ENCODE measurements at regions of chr3 and their contacts with region 1.

Region 1: GRCh38 chr3:9890249-9891071 is at the start of gene JAGN1:
- DNase-seq: peak; percentile 82
- H3K4me3 Mint-ChIP-seq: peak within 1 kb of the TSS; percentile 97
- H3K27ac Mint-ChIP-seq: peak within 1 kb of the TSS; percentile 98
- H3K4me1 Mint-ChIP-seq: peaks cover 36% of the 10 kb centered on the region
- H3K27me3 Mint-ChIP-seq: no peaks in the 10 kb centered on the region
- total RNA-seq, gene JAGN1: 42.4 and 46.3 TPM in 2 replicates

Region 2: DNA sequence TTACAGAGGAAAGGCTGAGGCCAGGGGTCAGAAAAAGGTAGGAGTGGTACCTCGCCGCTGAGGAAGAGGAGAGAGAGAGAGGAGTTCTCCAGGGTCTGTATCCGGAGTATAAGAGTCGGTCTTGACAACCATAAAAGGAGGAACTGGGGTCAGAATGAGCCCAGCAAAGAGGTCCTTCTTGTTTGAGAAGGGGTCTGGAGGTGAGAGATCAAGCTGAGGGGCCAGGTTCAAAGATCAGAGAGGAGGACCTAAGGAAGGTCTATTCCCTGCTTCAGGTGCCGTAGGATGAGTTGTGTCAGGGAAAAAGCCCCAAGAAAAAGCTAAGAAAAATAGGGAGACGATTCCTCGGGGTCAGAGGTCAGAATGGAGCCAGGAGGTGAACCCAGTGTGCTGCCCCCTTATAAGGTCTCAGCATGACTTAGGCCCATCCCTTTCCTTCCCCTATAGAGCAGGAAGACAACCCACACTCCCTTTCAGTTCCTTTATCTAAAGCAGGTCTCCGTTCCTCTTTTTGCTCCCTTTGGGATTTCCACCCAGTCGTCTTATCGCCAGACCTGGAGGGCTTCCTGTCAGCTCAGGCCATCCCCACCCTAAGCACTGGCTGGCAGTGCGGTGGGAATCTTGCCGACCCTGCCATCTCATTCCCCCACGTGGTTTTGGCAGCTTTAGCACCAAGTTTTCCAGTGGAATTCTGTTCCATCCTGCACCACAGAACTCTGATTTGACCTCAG is 240.5 kb before region 1 on chr3:
- intact Hi-C with region 1: loop called (anchors 1 kb)
- DNase-seq: no peak
- H3K4me3 Mint-ChIP-seq: peak overlapping the region; percentile 93
- H3K27ac Mint-ChIP-seq: peak overlapping the region; percentile 82
- H3K4me1 Mint-ChIP-seq: peaks cover 13% of the 10 kb centered on the region
- H3K27me3 Mint-ChIP-seq: no peaks in the 10 kb centered on the region

Region 3: DNA sequence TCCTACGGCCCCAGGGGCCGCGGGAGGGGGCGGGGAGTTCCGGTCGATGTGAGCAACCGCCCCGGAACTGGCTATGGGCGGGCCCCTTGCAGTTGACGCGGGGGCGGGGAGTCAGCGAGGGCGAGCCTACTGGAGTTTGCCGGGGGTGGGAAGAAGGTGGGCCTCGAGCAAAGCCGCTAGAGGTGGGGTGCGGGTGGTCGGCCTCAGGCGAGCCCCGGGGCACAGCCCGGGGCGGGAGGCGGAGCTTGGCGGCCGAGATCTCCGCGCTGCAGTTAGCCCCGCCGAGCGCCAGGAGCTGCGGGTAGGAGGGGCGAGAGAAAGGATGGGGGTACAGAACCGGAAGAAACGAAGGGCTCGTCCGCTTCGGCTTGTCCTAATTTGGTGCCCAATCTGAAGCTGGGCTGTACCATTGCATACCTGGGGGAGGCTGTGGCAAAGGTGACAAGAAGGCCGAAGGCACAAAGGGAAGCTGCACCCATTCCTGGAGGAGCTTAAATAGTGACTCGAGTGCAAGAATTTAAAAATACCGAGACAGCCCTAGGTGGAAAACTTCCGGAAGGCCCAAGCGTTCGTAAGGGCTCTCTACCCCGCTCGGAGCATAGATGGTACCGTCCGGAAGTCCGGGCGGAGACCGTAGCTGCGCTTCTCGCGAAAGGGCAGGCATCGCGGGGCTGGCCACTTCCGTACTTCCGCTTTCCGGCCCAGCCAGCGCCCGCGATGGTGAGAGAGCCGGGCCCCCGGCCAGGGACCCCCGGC is 97.9 kb before region 1 on chr3 and contains the starts of genes ARPC4 and TADA3:
- intact Hi-C with region 1: loop called (anchors 1 kb)
- DNase-seq: peak; percentile 89
- H3K4me3 Mint-ChIP-seq: peak within 1 kb of the TSS; percentile 99
- H3K27ac Mint-ChIP-seq: peak within 1 kb of the TSS; percentile 100
- H3K4me1 Mint-ChIP-seq: peaks cover 57% of the 10 kb centered on the region
- H3K27me3 Mint-ChIP-seq: no peaks in the 10 kb centered on the region
- total RNA-seq, gene ARPC4: 268 and 273 TPM in 2 replicates
- total RNA-seq, gene TADA3: 63.4 and 63.6 TPM in 2 replicates

Region 4: GRCh38 chr3:9915254-9916141 is 25.0 kb after region 1 on chr3:
- intact Hi-C with region 1: loop called (anchors 1 kb)
- DNase-seq: no peak
- H3K4me3 Mint-ChIP-seq: peak overlapping the region; percentile 68
- H3K27ac Mint-ChIP-seq: no peak overlapping the region
- H3K4me1 Mint-ChIP-seq: peaks cover 16% of the 10 kb centered on the region
- H3K27me3 Mint-ChIP-seq: peaks cover 7% of the 10 kb centered on the region

Region 5: DNA sequence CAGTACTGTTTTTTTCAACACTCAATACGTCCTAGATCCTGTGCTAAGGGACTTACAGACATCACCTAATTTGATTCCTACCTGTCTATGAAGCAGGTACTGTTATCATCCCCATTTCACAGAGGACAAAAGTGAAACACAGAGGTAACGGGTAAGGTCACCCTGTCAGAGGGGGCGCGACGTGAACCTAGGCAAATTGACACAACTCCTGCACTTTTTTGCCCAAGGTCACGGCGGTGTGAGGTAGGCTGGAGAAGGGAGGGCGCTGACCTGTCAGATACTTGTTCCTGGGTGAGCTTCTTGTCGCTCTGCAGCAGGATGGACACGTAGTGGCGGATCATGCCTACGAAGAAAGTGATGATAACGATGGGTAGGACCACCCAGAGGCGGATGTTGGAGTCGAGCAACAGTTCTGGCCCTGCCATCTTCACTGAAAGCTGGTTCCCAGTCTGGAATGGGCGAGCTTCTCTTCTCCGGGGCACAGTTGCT is 95.8 kb after region 1 on chr3:
- intact Hi-C with region 1: loop called (anchors 1 kb)
- DNase-seq: no peak
- H3K4me3 Mint-ChIP-seq: peak overlapping the region; percentile 97
- H3K27ac Mint-ChIP-seq: peak overlapping the region; percentile 98
- H3K4me1 Mint-ChIP-seq: peaks cover 27% of the 10 kb centered on the region
- H3K27me3 Mint-ChIP-seq: no peaks in the 10 kb centered on the region

Region 6: GRCh38 chr3:10142707-10143566 is 252.5 kb after region 1 on chr3:
- intact Hi-C with region 1: loop called (anchors 5 kb)
- DNase-seq: no peak
- H3K4me3 Mint-ChIP-seq: peak overlapping the region; percentile 90
- H3K27ac Mint-ChIP-seq: peak overlapping the region; percentile 85
- H3K4me1 Mint-ChIP-seq: peaks cover 25% of the 10 kb centered on the region
- H3K27me3 Mint-ChIP-seq: no peaks in the 10 kb centered on the region